Dorsolateral prefrontal cortex (tissue), 120 donors: ENCODE measurements at regions of chr11 and their contacts with region 1.

Region 1: DNA sequence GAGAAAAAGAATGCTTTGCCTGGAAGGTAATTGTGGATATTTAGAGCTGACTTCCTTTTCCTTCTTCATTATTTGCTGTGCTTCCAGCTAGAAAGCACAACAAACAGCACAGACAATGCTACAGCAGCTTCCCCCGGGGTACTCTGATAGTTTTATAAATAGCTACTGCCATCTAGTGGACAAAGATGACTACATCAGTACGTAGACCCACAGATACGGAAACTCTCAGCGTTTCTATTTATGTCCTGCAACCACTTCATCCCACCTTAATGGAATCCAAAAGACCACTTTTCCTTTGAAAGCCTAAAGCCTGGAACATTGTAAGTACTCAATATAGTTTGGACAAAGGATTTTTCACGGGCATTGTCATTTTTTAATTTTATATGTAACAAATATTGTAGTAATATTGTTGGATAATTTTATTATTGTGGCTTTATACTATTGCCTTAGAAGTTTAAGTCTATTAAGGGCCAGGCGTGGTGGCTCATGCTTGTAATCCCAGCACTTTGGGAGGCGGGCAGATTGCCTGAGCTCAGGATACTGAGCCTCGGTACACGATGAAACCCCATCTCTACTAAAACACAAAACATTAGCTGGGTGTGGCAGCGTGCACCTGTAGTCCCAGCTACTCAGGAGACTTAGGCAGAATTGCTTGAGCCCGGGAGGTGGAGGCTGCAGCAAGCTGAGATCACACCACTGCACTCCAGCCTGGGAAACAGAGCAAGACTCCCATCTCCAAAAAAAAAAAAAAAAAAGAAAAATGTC is 7.5 kb downstream of the HSPA8 start:
- DNase-seq: peak in 2 of 10 donors; percentile 52 to 63
- H3K4me3 ChIP-seq: peak overlapping the region in 2 of 59 donors; percentile 3 to 26
- H3K27ac ChIP-seq: peak overlapping the region in 32 of 59 donors; percentile 1 to 68 (median 32)
- H3K27me3 ChIP-seq: no peaks in the 10 kb centered on the region
- CTCF ChIP-seq: peak; percentile 62 to 89 (median 82)

Region 2: GRCh38 chr11:122690801-122691548 is 363.5 kb before region 1 on chr11:
- intact Hi-C with region 1: no loop called
- DNase-seq: no peak
- H3K4me3 ChIP-seq: peak overlapping the region in 10 of 59 donors; percentile 2 to 27 (median 18)
- H3K27ac ChIP-seq: peak overlapping the region in 55 of 59 donors; percentile 1 to 87 (median 63)
- H3K27me3 ChIP-seq: no peaks in the 10 kb centered on the region
- CTCF ChIP-seq: no peak

Region 3: DNA sequence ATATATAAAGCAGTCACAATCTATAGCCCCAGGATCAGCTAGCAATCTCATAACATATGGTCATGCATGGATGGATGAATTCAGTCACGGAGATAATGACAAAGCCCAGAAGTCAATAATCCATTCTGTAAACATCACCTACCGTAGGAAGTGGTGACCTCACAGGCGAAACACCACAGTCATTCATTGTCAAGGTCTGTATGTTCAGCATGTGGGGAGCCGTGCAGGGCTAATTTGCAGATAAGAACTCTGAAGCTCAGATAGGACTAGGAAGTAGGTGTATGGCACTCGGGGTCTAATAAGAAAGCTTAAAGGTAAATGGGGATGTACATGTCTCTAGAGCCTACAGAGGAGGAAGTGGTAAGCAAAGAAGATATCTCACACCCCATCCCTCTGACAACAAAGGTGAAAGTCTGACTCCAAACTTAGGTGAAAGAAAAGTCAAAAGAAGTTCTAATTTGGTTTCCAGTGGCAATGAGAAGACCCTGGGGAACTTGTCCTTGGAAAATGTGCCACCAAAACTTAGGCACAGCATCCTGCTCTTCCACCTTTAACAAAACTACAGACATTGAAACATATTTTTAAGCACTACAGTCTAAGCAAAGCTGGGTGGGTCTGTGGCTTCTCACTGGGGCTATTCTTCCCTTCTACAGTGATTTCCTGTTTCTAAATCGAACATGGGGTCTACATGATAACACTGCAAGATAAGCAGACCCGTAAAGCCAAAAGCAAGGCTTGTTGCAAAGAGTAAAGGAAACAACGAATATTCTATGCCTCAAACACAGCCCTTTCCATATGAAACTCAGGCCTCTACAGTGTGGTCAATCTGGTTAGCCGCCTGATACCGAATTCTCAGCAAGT is 211.0 kb before region 1 on chr11:
- intact Hi-C with region 1: no loop called
- DNase-seq: no peak
- H3K4me3 ChIP-seq: no peak overlapping the region
- H3K27ac ChIP-seq: no peak overlapping the region
- H3K27me3 ChIP-seq: peaks cover 0 to 4% (median 0%) of the 10 kb centered on the region in 45 donors
- CTCF ChIP-seq: no peak

Region 4: GRCh38 chr11:122863704-122864326 is 190.7 kb before region 1 on chr11:
- intact Hi-C with region 1: loop called in 1 of 2 experiments (anchors 10 kb)
- DNase-seq: peak in 9 of 10 donors; percentile 33 to 69 (median 50)
- H3K4me3 ChIP-seq: peak overlapping the region in 32 of 59 donors; percentile 0 to 45 (median 20)
- H3K27ac ChIP-seq: peak overlapping the region in 3 of 59 donors; percentile 40 to 91 (median 51)
- H3K27me3 ChIP-seq: peaks cover 0 to 9% (median 0%) of the 10 kb centered on the region in 45 donors
- CTCF ChIP-seq: peak; percentile 68 to 92 (median 82)